ENCODE measurements at regions of chr12 and their contacts with region 1.

Region 1: GRCh38 chr12:70733385-70733784 is 96.2 kb upstream of the PTPRB start:
- DNase-seq: peak in 1 of 2 experiments; percentile 23
- H3K4me3 ChIP-seq: no peak overlapping the region
- H3K27ac ChIP-seq: no peak overlapping the region
- H3K4me1 ChIP-seq: no peaks in the 10 kb centered on the region
- H3K27me3 ChIP-seq: no peaks in the 10 kb centered on the region
- CTCF ChIP-seq: peak in 2 of 3 experiments; percentile 69 to 76; a peak in 3 of 4 replicates
- EP300 ChIP-seq: no peak
- POLR2A ChIP-seq: no peak
- RAD21 ChIP-seq: peak; percentile 92 to 93

Region 2: DNA sequence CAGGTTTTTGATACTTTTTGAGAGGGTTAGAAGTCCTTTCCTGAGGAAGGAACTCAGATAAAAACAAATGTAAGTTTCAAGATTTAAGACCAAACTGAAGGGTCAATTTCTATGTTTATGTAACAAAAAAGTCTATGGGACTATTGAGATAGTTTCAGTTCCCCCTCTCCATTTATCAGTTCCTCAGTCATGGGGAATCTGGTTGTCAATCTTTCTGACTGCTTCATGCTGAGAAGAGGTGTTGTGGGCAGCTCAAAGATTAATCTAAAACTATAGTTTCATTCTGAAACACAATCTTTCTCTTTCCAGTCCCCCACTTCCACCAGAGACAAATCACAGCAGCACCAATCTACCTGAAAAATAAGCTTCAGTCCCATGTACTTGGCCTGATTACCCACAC is 273.6 kb before region 1 on chr12:
- CTCF ChIA-PET with region 1: no interaction called
- POLR2A ChIA-PET with region 1: no interaction called
- DNase-seq: no peak
- H3K4me3 ChIP-seq: no peak overlapping the region
- H3K27ac ChIP-seq: no peak overlapping the region
- H3K4me1 ChIP-seq: no peaks in the 10 kb centered on the region
- H3K27me3 ChIP-seq: no peaks in the 10 kb centered on the region
- CTCF ChIP-seq: no peak
- EP300 ChIP-seq: no peak
- POLR2A ChIP-seq: no peak
- RAD21 ChIP-seq: no peak

Region 3: DNA sequence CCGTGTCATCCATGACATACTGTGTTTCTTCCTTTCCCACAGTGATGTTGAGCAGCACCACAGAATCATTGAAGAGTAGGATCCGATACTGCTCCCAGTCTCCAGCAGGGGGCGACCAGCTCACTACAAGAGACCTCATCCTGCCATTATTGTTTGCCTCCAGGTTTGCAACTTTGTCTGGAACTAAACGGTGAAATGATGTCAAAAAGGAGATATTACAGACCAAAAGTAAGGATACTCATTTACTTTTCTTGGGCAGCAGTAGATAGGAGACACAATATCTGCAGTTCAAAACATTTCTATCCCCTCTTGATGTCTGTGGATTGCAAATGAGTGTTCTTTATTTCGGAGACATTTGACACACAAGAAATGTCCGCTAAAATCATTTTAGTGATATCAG is 143.3 kb before region 1 on chr12:
- CTCF ChIA-PET with region 1: interaction called, 17 read pairs
- POLR2A ChIA-PET with region 1: no interaction called
- DNase-seq: peak; percentile 38 to 81
- H3K4me3 ChIP-seq: no peak overlapping the region
- H3K27ac ChIP-seq: no peak overlapping the region
- H3K4me1 ChIP-seq: no peaks in the 10 kb centered on the region
- H3K27me3 ChIP-seq: no peaks in the 10 kb centered on the region
- CTCF ChIP-seq: peak; percentile 75 to 93 (median 85)
- EP300 ChIP-seq: no peak
- POLR2A ChIP-seq: no peak
- RAD21 ChIP-seq: peak; percentile 85 to 89

Region 4: DNA sequence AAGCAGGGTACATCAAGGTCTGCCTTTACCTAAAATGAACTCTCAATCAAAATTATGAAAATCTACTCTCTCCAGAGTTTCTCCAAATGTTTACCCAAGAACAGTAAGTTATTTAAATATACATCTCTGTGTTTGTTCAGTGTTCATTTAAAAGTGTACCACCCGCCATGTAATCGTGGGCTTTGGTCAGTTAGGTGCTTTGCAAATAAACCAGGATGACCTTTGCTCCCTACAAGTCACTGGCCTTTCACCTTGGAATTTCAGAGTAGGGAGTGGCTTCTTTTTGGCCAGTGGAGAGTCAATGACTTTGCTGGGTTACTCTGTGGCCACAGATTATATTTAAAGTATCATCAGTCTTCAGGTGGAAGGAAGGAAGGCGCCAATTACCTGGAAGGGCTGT is 21.6 kb before region 1 on chr12:
- CTCF ChIA-PET with region 1: no interaction called
- POLR2A ChIA-PET with region 1: no interaction called
- DNase-seq: no peak
- H3K4me3 ChIP-seq: no peak overlapping the region
- H3K27ac ChIP-seq: no peak overlapping the region
- H3K4me1 ChIP-seq: no peaks in the 10 kb centered on the region; a peak in 1 of 7 replicates
- H3K27me3 ChIP-seq: no peaks in the 10 kb centered on the region
- CTCF ChIP-seq: no peak
- EP300 ChIP-seq: no peak
- POLR2A ChIP-seq: no peak
- RAD21 ChIP-seq: no peak

Region 5: GRCh38 chr12:70747445-70748160 is 14.2 kb after region 1 on chr12:
- CTCF ChIA-PET with region 1: interaction called, 12 read pairs
- POLR2A ChIA-PET with region 1: no interaction called
- DNase-seq: no peak
- H3K4me3 ChIP-seq: no peak overlapping the region
- H3K27ac ChIP-seq: no peak overlapping the region
- H3K4me1 ChIP-seq: no peaks in the 10 kb centered on the region
- H3K27me3 ChIP-seq: peaks cover 0 to 1% (median 0%) of the 10 kb centered on the region in 4 experiments; a peak in 1 of 7 replicates
- CTCF ChIP-seq: no peak
- EP300 ChIP-seq: no peak
- POLR2A ChIP-seq: no peak
- RAD21 ChIP-seq: no peak

Region 6: GRCh38 chr12:70831538-70831937 is 98.2 kb after region 1 on chr12:
- CTCF ChIA-PET with region 1: interaction called, 10 read pairs
- POLR2A ChIA-PET with region 1: no interaction called
- DNase-seq: no peak
- H3K4me3 ChIP-seq: no peak overlapping the region
- H3K27ac ChIP-seq: no peak overlapping the region
- H3K4me1 ChIP-seq: no peaks in the 10 kb centered on the region
- H3K27me3 ChIP-seq: no peaks in the 10 kb centered on the region
- CTCF ChIP-seq: no peak
- EP300 ChIP-seq: no peak
- POLR2A ChIP-seq: no peak
- RAD21 ChIP-seq: no peak

Region 7: DNA sequence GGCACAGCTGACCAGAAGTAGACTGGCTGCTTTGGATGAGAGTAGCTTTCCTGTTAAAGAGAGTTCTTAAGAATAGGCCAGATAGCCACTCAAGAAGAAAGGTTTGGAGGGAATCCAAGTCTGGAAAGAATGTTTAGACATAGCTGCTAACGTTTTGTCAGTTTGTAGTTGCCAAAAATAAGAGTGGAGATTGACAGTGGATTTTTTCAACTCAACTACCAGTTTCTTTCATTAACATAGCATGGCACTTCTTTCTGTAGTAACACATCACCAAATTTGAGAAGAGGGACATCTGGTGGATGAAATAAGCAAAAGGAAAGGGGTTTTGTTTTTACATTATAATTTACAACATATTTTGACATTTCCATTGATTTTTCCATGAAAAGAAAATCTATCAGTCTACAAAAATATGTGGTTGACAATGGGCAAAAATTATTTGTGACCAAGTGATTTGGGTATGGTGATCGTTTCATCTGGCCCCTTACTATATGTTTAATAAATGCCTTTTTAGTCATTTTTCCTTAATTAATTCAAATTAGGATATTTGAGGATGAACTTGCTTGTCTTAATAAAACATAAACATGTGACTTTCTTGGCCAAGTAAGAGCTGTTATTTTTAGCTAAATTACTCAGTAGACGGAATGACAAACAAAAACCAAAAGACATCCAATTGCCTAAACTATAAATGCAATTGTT is 116.0 kb after region 1 on chr12:
- CTCF ChIA-PET with region 1: interaction called, 80 read pairs
- POLR2A ChIA-PET with region 1: no interaction called
- DNase-seq: no peak
- H3K4me3 ChIP-seq: no peak overlapping the region
- H3K27ac ChIP-seq: no peak overlapping the region
- H3K4me1 ChIP-seq: no peaks in the 10 kb centered on the region; a peak in 1 of 7 replicates
- H3K27me3 ChIP-seq: no peaks in the 10 kb centered on the region
- CTCF ChIP-seq: peak in 2 of 3 experiments; percentile 29 to 46; a peak in 2 of 4 replicates
- EP300 ChIP-seq: no peak
- POLR2A ChIP-seq: no peak
- RAD21 ChIP-seq: peak; percentile 58 to 62

Region 8: DNA sequence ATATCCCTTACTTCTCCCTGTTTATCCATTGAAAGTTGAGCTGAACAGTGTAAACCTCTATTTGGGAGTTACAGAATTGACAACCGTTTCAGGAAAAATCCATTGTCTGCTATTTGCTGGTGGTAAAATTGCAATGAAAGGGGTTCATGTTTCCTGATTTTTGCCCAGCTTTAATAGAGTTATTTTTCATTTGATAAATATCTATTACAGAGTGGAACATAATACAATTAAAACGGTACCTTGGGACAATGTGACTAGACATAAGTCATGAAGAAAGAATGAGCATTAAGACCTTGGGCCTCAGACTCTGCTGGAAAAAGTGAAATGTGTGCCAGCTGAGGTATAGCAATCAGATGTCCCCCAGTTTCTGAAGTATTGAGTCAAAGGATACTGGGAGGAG is 174.0 kb after region 1 on chr12:
- CTCF ChIA-PET with region 1: no interaction called
- POLR2A ChIA-PET with region 1: no interaction called
- DNase-seq: no peak
- H3K4me3 ChIP-seq: no peak overlapping the region
- H3K27ac ChIP-seq: no peak overlapping the region
- H3K4me1 ChIP-seq: peaks cover 0 to 3% (median under 1%) of the 10 kb centered on the region in 4 experiments; a peak in 1 of 7 replicates
- H3K27me3 ChIP-seq: no peaks in the 10 kb centered on the region
- CTCF ChIP-seq: no peak
- EP300 ChIP-seq: no peak
- POLR2A ChIP-seq: no peak
- RAD21 ChIP-seq: no peak

Region 9: DNA sequence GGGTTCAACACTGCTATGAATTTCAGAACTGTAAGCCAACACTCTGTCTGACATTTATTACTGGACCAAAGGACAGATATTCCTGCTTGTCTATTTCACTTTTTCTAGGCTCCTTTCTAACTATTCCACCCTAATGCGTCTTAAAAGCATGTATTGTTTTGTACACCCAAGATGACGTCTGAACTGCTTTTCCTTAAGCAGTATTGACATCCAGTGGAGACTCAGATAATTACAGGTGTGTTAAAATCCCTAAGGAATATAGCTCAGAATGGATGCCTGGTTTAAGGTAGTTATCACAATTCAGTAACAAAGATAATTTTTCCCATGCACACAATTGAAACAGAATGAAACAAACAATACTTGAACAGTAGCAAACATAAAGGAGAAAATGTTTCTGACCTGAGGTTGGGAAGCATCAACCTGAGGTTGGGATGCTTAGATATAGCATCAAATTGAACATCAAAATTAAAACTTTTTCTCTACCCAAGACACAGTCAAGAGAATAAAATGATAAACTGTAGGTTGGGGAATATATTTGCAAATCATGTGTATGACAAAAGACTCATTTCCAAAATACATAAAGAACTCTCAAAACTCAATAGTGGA is 280.9 kb after region 1 on chr12:
- CTCF ChIA-PET with region 1: interaction called, 35 read pairs
- POLR2A ChIA-PET with region 1: no interaction called
- DNase-seq: no peak
- H3K4me3 ChIP-seq: no peak overlapping the region
- H3K27ac ChIP-seq: no peak overlapping the region
- H3K4me1 ChIP-seq: no peaks in the 10 kb centered on the region
- H3K27me3 ChIP-seq: no peaks in the 10 kb centered on the region
- CTCF ChIP-seq: peak in 2 of 3 experiments; percentile 46 to 55; a peak in 2 of 4 replicates
- EP300 ChIP-seq: no peak
- POLR2A ChIP-seq: no peak
- RAD21 ChIP-seq: peak; percentile 89 to 91

Region 10: DNA sequence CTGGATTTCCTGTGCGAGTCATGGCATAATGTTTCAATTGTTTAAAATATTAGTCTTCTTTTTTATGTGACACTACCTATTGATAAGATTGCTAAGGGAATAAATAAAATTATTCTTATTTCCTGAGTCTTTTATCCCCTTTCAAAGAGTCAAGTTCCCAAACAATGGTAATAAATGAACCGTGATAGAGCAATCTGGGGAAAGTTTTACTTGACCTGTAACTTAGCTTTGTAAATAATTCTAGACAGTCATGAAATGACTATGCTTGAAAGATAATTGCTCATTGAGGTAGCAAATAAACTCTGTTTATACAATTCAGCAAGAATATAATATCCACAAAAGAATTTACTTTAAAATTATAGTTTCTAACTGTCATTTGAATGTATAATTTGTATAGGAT is 342.4 kb after region 1 on chr12:
- CTCF ChIA-PET with region 1: no interaction called
- POLR2A ChIA-PET with region 1: no interaction called
- DNase-seq: no peak
- H3K4me3 ChIP-seq: no peak overlapping the region
- H3K27ac ChIP-seq: no peak overlapping the region
- H3K4me1 ChIP-seq: no peaks in the 10 kb centered on the region
- H3K27me3 ChIP-seq: no peaks in the 10 kb centered on the region
- CTCF ChIP-seq: no peak
- EP300 ChIP-seq: no peak
- POLR2A ChIP-seq: no peak
- RAD21 ChIP-seq: no peak